ENCODE measurements at regions of chr4 and their contacts with region 1.

Region 1: GRCh38 chr4:182938205-182938645 is 21.0 kb upstream of the DCTD start:
- DNase-seq: peak; percentile 75
- ATAC-seq: peak; percentile 100
- H3K4me3 ChIP-seq: no peak overlapping the region
- H3K27ac ChIP-seq: no peak overlapping the region
- H3K4me1 ChIP-seq: no peaks in the 10 kb centered on the region
- H3K27me3 ChIP-seq: no peaks in the 10 kb centered on the region
- CTCF ChIP-seq: peak; percentile 86

Region 2: DNA sequence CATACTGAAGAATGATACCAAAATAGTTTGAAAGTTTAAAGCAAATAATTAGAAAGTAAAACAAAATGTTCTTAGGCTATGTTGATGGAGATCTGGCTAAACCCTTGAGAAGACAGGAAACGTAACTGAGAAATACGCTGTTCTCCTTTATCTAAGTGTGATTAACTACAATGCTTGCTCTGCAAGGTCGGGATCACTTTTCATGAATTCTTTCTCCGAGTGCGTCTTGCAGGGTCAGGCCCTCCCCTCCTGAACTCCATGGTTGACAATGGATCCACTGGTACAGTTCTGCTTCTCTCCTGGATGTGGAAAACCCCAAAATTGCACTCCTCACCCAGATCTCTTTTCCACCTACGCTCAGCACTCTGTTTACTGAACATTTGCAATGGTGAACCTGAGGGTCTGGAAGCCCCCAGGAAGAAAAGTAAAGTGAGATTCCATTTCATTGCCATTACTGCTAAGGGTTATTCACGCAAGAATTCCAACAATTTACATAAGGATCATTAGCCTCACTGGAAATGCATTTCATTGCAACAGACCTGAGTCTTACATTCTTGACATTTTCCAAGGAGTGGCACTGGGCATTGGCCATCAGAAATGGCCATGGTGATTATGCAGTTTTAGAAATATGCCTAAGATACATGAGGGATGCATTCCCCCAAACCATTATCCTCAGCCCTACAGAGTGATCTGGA is 136.2 kb after region 1 on chr4:
- CTCF ChIA-PET with region 1: interaction called, 5 read pairs
- POLR2A ChIA-PET with region 1: no interaction called
- intact Hi-C with region 1: loop called (anchors 1 kb)
- DNase-seq: no peak
- ATAC-seq: no peak
- H3K4me3 ChIP-seq: no peak overlapping the region
- H3K27ac ChIP-seq: no peak overlapping the region
- H3K4me1 ChIP-seq: no peaks in the 10 kb centered on the region
- H3K27me3 ChIP-seq: no peaks in the 10 kb centered on the region
- CTCF ChIP-seq: no peak

Region 3: GRCh38 chr4:183142571-183143550 is 204.6 kb after region 1 on chr4:
- CTCF ChIA-PET with region 1: no interaction called
- POLR2A ChIA-PET with region 1: no interaction called
- intact Hi-C with region 1: loop called (anchors 2 kb)
- DNase-seq: peak; percentile 85
- ATAC-seq: peak; percentile 88
- H3K4me3 ChIP-seq: no peak overlapping the region; the same call in 1 of the 2 replicates
- H3K27ac ChIP-seq: peak overlapping the region; percentile 38; the same call in 1 of the 2 replicates
- H3K4me1 ChIP-seq: peaks cover 21% of the 10 kb centered on the region
- H3K27me3 ChIP-seq: no peaks in the 10 kb centered on the region
- CTCF ChIP-seq: no peak

Measured in PC-3 (cell line).